Activated T-helper 1 cell treated with anti-CD3 and anti-CD28 coated beads, Interleukin-12 subunit alpha, Interleukin-12 subunit beta, Interleukin-2, Interleukin-4 antibody, amounts not matched to agents 30 ng/mL and 10 ng/mL and 1 ng/mL, durations not matched to agents 14 hours and 24 hours and 36 hours (primary cell): ENCODE measurements at regions of chr1 and their contacts with region 1.

Region 1: DNA sequence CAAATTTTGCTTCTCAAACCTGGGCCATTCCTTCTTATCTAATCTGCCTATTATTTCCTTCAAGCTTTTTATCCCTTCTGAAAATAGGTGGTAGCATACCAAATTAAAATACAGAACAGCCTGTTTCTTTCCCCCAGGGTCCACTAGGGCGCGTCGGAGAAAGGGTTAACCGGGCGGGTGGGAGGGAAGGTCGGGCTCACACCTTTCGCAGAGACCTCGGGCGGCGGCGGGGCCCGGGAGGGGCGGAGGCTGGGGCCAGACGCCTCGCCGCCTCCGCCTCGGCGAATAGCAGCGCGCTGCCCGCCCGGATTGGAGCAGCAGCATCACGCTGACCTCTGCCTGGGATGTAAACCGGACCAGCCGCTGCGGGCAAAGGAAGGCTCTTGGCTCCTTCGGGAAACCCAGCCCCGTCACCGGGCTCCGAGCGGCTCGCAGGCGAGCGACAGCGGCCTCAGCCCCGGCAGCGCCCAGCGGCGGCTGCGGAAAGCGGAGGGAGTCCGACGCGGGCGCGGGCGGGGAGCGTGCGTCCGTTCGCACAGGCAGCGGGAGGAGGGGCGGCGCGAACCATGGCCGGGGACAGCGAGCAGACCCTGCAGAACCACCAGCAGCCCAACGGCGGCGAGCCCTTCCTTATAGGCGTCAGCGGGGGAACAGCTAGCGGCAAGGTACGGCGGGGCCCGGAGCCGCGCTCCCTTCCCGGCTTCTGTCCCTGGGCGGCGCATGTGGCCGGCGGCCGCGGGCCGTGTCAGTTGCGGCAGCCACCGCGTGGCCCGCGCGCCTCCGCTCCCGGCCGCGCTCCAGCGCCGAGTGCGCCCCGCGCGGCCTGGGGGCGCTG is at the start of gene UCK2:
- DNase-seq: peak; percentile 51
- H3K4me3 Mint-ChIP-seq: peak within 1 kb of the TSS; percentile 96
- H3K27ac Mint-ChIP-seq: peak within 1 kb of the TSS; percentile 90
- H3K4me1 Mint-ChIP-seq: peaks cover 22% of the 10 kb centered on the region
- H3K27me3 Mint-ChIP-seq: peaks cover 15% of the 10 kb centered on the region
- total RNA-seq, gene UCK2: 109 and 112 TPM in 2 replicates

Region 2: GRCh38 chr1:165392634-165393571 is 434.6 kb before region 1 on chr1:
- intact Hi-C with region 1: loop called (anchors 2 kb)
- DNase-seq: peak; percentile 90
- H3K4me3 Mint-ChIP-seq: peak overlapping the region; percentile 58
- H3K27ac Mint-ChIP-seq: peak overlapping the region; percentile 92
- H3K4me1 Mint-ChIP-seq: peaks cover 25% of the 10 kb centered on the region
- H3K27me3 Mint-ChIP-seq: peaks cover 80% of the 10 kb centered on the region

Region 3: GRCh38 chr1:165768513-165769394 is 58.7 kb before region 1 on chr1 and contains the start of gene TMCO1:
- intact Hi-C with region 1: loop called (anchors 1 kb)
- DNase-seq: peak; percentile 94
- H3K4me3 Mint-ChIP-seq: peak within 1 kb of the TSS; percentile 99
- H3K27ac Mint-ChIP-seq: peak within 1 kb of the TSS; percentile 100
- H3K4me1 Mint-ChIP-seq: peaks cover 53% of the 10 kb centered on the region
- H3K27me3 Mint-ChIP-seq: no peaks in the 10 kb centered on the region
- total RNA-seq, gene TMCO1: 97.1 and 102 TPM in 2 replicates

Region 4: GRCh38 chr1:165871311-165872067 is 44.0 kb after region 1 on chr1:
- intact Hi-C with region 1: loop called (anchors 1 kb)
- DNase-seq: peak; percentile 49
- H3K4me3 Mint-ChIP-seq: peak overlapping the region; percentile 55
- H3K27ac Mint-ChIP-seq: peak overlapping the region; percentile 63
- H3K4me1 Mint-ChIP-seq: peaks cover 54% of the 10 kb centered on the region
- H3K27me3 Mint-ChIP-seq: peaks cover 5% of the 10 kb centered on the region